Esophagus muscularis mucosa (tissue), 4 donors: ENCODE measurements at regions of chr3 and their contacts with region 1.

Region 1: GRCh38 chr3:120661118-120661935 is 20.7 kb downstream of the HGD start:
- DNase-seq: no peak
- H3K4me3 ChIP-seq: no peak overlapping the region
- H3K27ac ChIP-seq: no peak overlapping the region
- H3K4me1 ChIP-seq: peaks cover 0 to 10% (median 4%) of the 10 kb centered on the region in 4 donors
- H3K27me3 ChIP-seq: no peaks in the 10 kb centered on the region
- CTCF ChIP-seq: no peak
- EP300 ChIP-seq: no peak
- POLR2A ChIP-seq: no peak

Region 2: DNA sequence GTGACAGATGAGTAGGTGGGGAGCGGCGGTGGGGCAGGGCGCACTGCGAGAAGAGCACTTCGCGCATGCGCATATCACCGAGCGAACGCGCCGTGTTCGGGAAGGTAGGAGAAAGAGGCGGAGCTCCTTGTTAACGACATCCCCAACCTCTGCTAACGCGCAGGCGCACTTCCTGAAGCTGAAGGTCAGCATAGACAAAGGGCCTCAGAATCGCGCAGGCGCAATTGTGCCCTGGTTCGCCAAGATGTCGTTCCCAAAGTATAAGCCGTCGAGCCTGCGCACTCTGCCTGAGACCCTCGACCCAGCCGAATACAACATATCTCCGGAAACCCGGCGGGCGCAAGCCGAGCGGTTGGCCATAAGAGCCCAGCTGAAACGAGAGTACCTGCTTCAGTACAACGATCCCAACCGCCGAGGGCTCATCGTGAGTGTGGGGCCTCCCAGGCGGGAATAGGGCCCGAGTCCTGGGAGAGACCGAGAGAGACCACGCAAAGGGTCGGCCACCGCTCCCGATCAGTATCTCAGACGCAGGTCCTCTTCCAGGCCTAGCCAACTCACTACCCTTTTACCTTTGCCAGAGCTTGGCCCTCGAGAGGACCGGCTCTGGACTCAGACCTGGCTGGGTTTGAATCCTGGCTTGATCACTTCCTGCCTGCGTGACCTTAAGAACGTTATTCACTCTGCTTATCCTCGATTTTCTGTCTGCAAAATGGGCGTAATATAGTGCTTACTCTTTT is 65.0 kb before region 1 on chr3 and contains the start of gene NDUFB4:
- intact Hi-C with region 1: no loop called
- DNase-seq: peak; percentile 98
- H3K4me3 ChIP-seq: peak within 1 kb of the TSS; percentile 65 to 79 (median 77)
- H3K27ac ChIP-seq: peak within 1 kb of the TSS; percentile 87 to 90 (median 88)
- H3K4me1 ChIP-seq: peaks cover 21 to 51% (median 49%) of the 10 kb centered on the region in 4 donors
- H3K27me3 ChIP-seq: no peaks in the 10 kb centered on the region
- CTCF ChIP-seq: no peak
- EP300 ChIP-seq: no peak
- POLR2A ChIP-seq: no peak
- total RNA-seq, gene NDUFB4: 142 to 333 (median 256) TPM

Region 3: DNA sequence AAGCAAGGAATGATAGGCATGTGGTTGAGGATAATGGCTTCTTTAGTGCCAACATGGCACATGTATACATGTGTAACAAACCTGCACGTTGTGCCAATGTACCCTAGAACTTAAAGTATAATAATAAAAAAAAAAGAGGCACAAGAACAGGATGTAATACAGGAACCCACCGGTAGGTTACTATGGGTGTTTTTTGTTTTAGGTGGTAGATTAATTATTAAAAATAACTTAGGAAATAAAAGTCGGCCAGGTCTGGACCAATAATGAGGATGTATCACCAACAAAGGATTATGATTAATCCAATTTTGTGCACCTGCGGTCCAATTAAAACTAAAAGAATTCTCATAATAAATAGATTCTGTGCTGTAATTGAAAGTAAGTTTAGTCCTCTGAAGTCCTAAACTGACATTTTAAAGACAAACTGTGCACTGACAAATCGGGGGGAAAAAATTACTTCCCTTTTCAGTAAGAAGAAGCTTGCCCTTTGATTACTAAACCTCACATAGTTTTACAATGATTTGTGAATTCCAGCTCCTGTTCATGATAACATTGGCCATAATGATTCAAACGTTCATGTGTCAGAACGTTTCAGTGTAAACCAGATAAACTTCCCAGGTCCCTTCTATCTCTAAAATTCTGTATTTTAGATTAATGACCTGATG is 1584.3 kb after region 1 on chr3:
- intact Hi-C with region 1: loop called (anchors 10 kb)
- DNase-seq: no peak
- H3K4me3 ChIP-seq: no peak overlapping the region
- H3K27ac ChIP-seq: no peak overlapping the region
- H3K4me1 ChIP-seq: no peaks in the 10 kb centered on the region
- H3K27me3 ChIP-seq: no peaks in the 10 kb centered on the region
- CTCF ChIP-seq: no peak
- EP300 ChIP-seq: no peak
- POLR2A ChIP-seq: no peak